WTC11 (cell line): ENCODE measurements at regions of chr6 and their contacts with region 1.

Region 1: GRCh38 chr6:1381481-1382330 is 7.7 kb upstream of the FOXF2 start:
- DNase-seq: peak; percentile 80
- ATAC-seq: peak; percentile 6
- H3K4me3 Mint-ChIP-seq: peak overlapping the region; percentile 65
- H3K27ac Mint-ChIP-seq: no peak overlapping the region
- H3K4me1 Mint-ChIP-seq: peaks cover 49% of the 10 kb centered on the region
- H3K27me3 Mint-ChIP-seq: peaks cover 99% of the 10 kb centered on the region
- CTCF ChIP-seq: peak; percentile 96

Region 2: DNA sequence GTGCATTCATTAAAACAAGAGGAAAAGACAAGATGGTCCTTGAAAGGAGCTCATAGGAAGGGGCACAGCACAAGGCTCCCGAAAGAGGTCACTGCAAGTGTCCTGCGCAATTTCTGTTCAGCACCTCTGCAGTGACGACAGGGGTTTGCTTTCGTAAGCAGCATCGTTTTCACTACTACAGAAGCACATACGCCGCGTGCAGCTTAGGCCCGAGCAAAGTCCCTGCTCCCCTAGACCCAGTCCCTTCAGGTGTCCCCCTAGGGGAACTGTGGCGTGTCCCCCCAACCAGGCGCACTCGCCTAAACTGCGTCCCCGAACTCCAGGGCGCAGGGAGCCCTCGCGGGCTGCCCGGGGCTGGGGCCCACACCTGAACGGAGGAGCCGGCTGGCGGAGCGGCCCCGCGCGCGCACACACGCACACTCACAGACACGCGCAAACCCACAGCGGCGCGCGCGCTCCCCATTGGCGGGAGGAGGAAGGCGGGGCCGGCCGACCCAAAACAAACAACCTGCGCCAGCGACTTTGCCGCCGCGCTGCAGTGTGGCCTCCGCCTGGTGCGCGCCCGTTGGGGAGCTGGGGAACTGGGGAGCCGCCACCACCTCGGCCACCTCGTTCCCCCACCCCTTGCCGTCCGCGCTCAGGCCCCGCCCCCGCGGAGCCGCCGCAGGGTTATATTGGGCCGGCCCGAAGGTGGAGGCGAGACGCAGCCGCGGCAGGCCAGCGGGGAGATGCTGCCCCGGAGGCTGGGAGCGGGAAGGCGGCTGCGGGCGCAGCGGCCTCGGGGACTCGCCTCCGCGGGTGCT is 70.1 kb before region 1 on chr6 and contains the start of gene FOXQ1:
- CTCF ChIA-PET with region 1: interaction called, 24 read pairs
- POLR2A ChIA-PET with region 1: interaction called, 3 read pairs
- DNase-seq: peak; percentile 70
- ATAC-seq: peak; percentile 40
- H3K4me3 Mint-ChIP-seq: peak within 1 kb of the TSS; percentile 84
- H3K27ac Mint-ChIP-seq: no peak within 1 kb of the TSS
- H3K4me1 Mint-ChIP-seq: peaks cover 33% of the 10 kb centered on the region
- H3K27me3 Mint-ChIP-seq: peaks cover 95% of the 10 kb centered on the region
- CTCF ChIP-seq: no peak
- total RNA-seq, gene FOXQ1: 0.25 to 0.35 TPM (median 0.30 TPM) in 3 replicates

Region 3: GRCh38 chr6:1396952-1397868 is 15.5 kb after region 1 on chr6:
- CTCF ChIA-PET with region 1: interaction called, 23 read pairs
- POLR2A ChIA-PET with region 1: no interaction called
- DNase-seq: peak; percentile 80
- ATAC-seq: no peak
- H3K4me3 Mint-ChIP-seq: no peak overlapping the region
- H3K27ac Mint-ChIP-seq: no peak overlapping the region
- H3K4me1 Mint-ChIP-seq: peaks cover 35% of the 10 kb centered on the region
- H3K27me3 Mint-ChIP-seq: peaks cover 83% of the 10 kb centered on the region
- CTCF ChIP-seq: peak; percentile 95

Region 4: GRCh38 chr6:1407499-1407990 is 25.8 kb after region 1 on chr6:
- CTCF ChIA-PET with region 1: no interaction called
- POLR2A ChIA-PET with region 1: no interaction called
- DNase-seq: no peak
- ATAC-seq: no peak
- H3K4me3 Mint-ChIP-seq: no peak overlapping the region
- H3K27ac Mint-ChIP-seq: no peak overlapping the region
- H3K4me1 Mint-ChIP-seq: peaks cover 26% of the 10 kb centered on the region
- H3K27me3 Mint-ChIP-seq: peaks cover 16% of the 10 kb centered on the region
- CTCF ChIP-seq: no peak

Region 5: GRCh38 chr6:1436334-1437306 is 54.9 kb after region 1 on chr6:
- CTCF ChIA-PET with region 1: interaction called, 12 read pairs
- POLR2A ChIA-PET with region 1: no interaction called
- DNase-seq: peak; percentile 52
- ATAC-seq: peak; percentile 88
- H3K4me3 Mint-ChIP-seq: no peak overlapping the region
- H3K27ac Mint-ChIP-seq: no peak overlapping the region
- H3K4me1 Mint-ChIP-seq: peaks cover 20% of the 10 kb centered on the region
- H3K27me3 Mint-ChIP-seq: peaks cover 11% of the 10 kb centered on the region
- CTCF ChIP-seq: peak; percentile 65; the same call in 1 of the 2 replicates

Region 6: DNA sequence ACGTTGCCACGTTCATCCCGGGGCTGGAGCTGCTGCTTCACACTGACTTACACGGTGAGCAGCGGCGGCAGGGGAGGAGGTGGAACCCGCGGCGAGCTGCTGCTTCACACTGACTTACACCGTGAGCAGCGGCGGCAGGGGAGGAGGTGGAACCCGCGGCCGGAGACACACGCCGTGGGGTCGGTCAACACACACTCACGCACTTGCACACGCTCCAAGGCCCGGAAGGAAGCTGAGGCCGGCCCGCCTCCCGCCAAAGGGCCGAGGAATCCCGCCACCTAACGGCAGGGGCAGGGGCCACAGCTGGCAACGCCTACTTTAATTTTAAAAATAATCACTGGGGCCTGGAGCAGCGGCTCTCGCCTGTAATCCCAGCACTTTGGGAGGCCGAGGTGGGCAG is 133.6 kb after region 1 on chr6:
- CTCF ChIA-PET with region 1: no interaction called
- POLR2A ChIA-PET with region 1: no interaction called
- DNase-seq: no peak
- ATAC-seq: no peak
- H3K4me3 Mint-ChIP-seq: no peak overlapping the region
- H3K27ac Mint-ChIP-seq: no peak overlapping the region
- H3K4me1 Mint-ChIP-seq: peaks cover 14% of the 10 kb centered on the region
- H3K27me3 Mint-ChIP-seq: no peaks in the 10 kb centered on the region; the same call in 1 of the 2 replicates
- CTCF ChIP-seq: no peak